Cardiac septum (tissue), 1 donor: ENCODE measurements at regions of chr15 and their contacts with region 1.

Region 1: GRCh38 chr15:36501063-36501678 is 78.3 kb upstream of the CDIN1 start:
- DNase-seq: no peak

Region 2: GRCh38 chr15:36356978-36357601 is 144.1 kb before region 1 on chr15:
- intact Hi-C with region 1: no loop called
- DNase-seq: no peak

Region 3: GRCh38 chr15:36877796-36878683 is 376.9 kb after region 1 on chr15:
- intact Hi-C with region 1: loop called (anchors 5 kb)
- DNase-seq: no peak

Region 4: DNA sequence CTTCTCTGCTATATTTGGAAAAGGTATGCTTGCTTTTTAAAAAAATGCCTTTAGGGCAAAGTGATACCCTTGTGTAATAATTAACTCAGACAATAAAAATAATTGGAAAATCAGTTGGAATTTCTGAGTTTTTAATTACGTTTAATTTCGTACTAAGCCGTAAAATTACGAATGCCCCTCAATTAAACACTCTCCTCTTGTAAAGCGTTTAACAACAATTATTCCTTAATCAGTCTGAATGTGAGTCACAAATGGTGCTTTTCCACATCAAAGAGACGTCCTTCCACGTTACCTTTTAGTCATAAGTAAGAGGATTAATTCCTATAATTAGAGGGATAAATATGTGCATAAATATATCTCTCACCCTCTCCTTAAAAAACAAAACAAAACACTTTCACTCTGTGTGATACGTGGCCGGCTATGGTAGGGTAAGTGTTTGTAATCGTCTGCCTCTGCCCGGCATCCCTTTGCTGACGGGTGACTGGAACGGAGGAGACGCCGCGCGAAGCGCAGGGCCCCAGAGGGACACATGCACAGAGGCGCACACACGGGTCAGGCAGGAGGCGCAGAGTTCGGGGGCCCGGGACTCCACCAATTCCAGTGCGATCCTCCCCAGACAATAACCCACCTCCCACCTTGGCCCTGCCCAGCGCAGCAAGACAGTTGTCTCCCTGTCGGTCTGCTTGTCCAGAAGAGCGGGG is 608.9 kb after region 1 on chr15:
- intact Hi-C with region 1: loop called (anchors 10 kb)
- DNase-seq: peak; percentile 81